Esophagus muscularis mucosa (tissue), 4 donors: ENCODE measurements at regions of chr1 and their contacts with region 1.

Region 1: DNA sequence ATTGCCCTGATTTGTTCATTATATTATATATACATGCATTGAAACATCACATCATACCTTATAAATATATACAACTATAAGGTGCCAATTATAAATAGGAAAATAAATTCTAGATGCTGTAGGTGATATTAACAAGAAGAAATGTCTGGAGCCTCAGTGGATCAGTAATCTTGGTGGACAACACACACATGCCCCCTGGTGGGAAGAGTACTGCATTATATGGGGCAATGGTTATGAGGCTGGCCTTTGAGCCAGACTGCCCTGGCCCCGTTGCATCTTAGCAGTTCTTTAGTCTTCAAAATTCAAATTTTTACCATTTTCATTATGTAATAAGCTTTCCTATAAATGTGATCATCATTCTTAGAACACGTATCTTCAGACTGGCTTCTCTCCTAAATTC is 335.0 kb upstream of the GREM2 start:
- DNase-seq: no peak
- H3K4me3 ChIP-seq: no peak overlapping the region
- H3K27ac ChIP-seq: no peak overlapping the region
- H3K4me1 ChIP-seq: no peaks in the 10 kb centered on the region
- H3K27me3 ChIP-seq: no peaks in the 10 kb centered on the region
- CTCF ChIP-seq: peak; percentile 12 to 47 (median 35)
- EP300 ChIP-seq: no peak
- POLR2A ChIP-seq: no peak

Region 2: DNA sequence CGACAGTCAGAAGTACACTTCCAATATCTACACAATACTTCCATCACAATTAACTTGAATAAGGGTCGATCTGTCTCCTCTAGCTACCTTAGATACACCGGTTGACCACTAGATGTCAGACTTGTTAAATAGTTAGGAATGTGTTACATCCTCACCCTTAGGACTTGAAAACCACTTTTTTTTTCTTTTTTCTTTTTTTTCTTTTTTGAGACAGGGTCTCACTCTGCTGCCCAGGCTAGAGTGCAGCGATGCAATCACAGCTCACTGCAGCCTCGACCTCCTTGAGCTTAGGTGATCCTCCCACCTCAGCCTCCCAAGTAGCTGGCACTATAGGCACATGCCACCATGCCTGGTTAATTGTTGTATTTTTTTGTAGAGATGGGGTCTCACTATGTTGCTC is 214.5 kb before region 1 on chr1:
- intact Hi-C with region 1: loop called (anchors 10 kb)
- DNase-seq: no peak
- H3K4me3 ChIP-seq: no peak overlapping the region
- H3K27ac ChIP-seq: no peak overlapping the region
- H3K4me1 ChIP-seq: no peaks in the 10 kb centered on the region
- H3K27me3 ChIP-seq: no peaks in the 10 kb centered on the region
- CTCF ChIP-seq: peak; percentile 37 to 66 (median 54)
- EP300 ChIP-seq: no peak
- POLR2A ChIP-seq: no peak

Region 3: DNA sequence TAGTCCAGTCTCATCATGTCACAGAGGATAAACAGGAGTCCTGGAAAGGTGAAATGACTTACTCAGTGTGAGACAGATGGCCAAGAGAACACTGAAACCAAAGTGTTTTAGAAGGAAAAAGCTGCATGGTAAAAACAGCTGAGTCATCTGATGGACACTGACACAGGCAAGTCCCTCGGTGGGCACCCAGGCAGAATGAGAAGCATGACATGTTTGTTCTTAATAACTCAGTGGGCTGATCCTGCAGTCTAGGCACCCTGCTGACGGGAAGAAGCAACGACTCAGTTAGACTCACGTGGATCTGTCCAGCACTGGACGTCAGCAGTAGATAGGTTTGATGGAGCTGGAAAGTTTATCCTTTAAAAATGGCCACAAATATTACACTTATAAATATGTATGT is 293.1 kb after region 1 on chr1:
- intact Hi-C with region 1: no loop called
- DNase-seq: no peak
- H3K4me3 ChIP-seq: no peak overlapping the region
- H3K27ac ChIP-seq: no peak overlapping the region
- H3K4me1 ChIP-seq: no peaks in the 10 kb centered on the region
- H3K27me3 ChIP-seq: no peaks in the 10 kb centered on the region
- CTCF ChIP-seq: no peak
- EP300 ChIP-seq: no peak
- POLR2A ChIP-seq: no peak